ENCODE measurements at regions of chr7 and their contacts with region 1.

Region 1: DNA sequence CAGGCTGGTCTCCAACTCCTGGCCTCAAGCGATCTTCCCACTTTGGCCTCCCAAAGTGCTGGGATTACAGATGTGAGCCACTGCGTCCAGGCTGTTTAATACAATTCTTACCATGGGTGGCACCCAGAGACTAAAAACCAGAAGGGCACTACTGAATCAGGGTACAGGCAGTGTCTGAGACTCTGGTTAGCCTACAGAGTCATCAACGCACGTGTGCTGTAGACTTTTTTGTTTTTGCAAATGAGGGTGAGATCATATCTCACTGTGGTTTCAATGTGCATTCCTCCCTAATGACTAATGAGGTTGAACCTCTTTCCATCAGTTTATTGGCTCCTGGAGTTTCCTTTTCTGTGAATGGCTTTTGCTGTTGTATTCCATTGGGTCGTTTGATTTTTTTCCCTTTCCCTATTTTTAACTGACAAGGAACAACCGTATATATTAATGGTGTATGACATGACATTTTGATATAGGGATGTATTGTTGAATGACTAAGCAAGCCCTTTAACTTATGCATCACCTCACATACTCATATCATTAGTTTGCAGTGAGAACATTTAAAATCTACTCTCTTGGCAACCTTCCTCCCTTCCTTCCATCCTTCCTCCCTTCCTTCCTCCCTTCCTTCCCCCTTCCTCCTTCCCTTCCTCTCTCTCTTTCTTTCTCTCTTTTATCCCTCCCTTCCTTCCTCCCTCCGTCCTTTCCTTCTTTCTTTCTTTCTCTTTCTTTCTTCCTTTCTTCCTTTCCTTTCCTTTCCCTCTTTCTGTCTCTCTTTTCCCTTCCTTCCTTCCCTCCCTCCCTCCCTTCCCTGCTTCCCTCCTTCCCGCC is 9.3 kb upstream of the METTL27 start:
- DNase-seq: peak; percentile 100
- H3K4me3 ChIP-seq: no peak overlapping the region
- H3K27ac ChIP-seq: peak overlapping the region; percentile 98
- H3K4me1 ChIP-seq: peaks cover 43% of the 10 kb centered on the region
- H3K27me3 ChIP-seq: no peaks in the 10 kb centered on the region
- CTCF ChIP-seq: no peak

Region 2: DNA sequence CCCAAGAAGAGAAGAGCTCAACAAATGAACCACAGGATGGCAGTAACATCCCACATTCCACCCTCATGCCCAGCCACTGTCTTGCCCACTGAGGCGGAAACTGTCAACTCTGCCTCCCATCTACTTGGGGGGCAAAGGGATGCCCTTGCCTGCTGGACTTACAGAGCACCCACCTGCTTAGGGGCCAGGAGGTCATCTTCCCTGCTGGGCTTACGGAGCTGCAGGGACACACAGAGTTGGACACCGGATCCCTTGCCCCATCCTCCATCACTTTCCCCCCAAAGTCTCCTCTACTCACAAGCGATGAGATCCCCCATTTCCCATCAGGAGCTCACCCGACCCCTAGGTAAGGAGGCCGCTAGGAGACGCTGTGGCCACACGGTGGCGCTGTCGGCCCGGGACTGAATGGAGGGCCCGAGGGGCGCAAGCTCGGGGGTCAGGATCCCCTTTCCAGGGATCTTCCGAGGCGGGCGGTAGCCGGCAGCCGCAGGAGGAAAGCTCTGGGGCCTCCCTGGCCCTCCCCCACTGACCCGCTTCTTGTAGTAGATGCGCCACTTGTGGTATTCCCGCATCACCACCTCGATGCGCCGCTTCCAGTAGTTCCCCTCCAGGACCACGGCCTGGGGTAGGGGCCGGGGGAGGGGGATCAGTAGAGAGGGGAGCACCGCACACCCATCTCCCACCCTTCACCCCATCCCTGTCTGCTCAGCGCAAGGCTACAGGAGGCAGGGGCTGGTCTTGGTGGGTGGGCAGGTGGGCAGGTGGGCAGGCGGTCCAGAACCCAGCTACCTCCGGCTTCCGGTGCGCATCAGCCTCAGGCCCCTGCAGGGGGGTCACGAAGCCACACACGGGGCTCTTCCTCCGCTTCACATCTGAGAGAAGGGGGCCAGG is 244.6 kb before region 1 on chr7:
- CTCF ChIA-PET with region 1: no interaction called
- dilution Hi-C with region 1: no loop called
- in situ Hi-C with region 1: no loop called
- intact Hi-C with region 1: loop called (anchors 2 kb)
- DNase-seq: no peak
- H3K4me3 ChIP-seq: no peak overlapping the region
- H3K27ac ChIP-seq: no peak overlapping the region
- H3K4me1 ChIP-seq: peaks cover 9% of the 10 kb centered on the region
- H3K27me3 ChIP-seq: no peaks in the 10 kb centered on the region
- CTCF ChIP-seq: peak; percentile 85 to 98

Region 3: DNA sequence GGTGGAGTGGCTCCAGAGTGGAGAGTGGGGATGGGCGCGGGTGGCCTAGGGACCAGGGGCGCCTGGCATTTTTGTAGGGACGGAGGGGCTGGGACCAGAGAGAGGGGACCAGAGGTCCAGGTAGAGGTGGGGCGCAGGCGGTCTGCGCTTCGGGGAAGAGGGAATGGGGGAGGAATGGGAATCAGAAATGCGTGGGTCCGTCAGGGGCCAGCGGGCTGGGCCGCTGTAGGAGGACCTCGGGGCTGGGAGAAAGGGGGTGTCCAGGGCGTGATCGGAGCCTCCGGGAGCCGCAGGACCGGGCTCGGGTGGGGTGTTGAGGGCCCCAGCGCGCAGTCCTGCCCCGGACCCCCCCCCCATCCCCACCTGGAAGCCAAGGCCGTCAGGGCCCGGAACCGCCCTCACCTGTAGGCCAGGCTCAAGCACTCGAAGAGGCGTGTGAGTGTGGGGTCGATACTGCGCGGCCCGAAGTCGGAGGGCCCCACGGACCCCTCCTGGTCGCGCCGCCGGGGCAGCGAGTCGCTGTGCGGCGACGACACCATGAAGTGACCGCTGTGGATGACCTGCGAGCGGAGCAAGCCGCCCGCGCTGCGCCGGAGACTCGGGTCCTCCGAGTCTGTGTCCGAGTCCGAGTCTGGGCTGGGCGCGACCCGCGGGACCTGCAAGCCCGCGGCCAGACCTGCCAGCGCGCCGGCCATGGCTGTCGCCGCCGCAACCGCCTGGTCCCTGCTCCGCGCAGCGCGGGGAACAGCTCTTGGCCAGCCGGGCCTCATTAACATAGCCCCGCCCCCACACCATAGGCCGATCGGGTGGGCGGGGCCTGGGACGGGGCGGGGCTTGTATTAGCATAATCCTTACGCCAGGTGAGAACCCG is 227.6 kb before region 1 on chr7 and contains the start of gene MLXIPL:
- CTCF ChIA-PET with region 1: no interaction called
- dilution Hi-C with region 1: no loop called
- in situ Hi-C with region 1: loop called in 1 of 2 experiments (anchors 10 kb)
- intact Hi-C with region 1: no loop called
- DNase-seq: peak; percentile 62
- H3K4me3 ChIP-seq: peak within 1 kb of the TSS; percentile 39 to 47 (median 46)
- H3K27ac ChIP-seq: no peak within 1 kb of the TSS
- H3K4me1 ChIP-seq: peaks cover 14% of the 10 kb centered on the region
- H3K27me3 ChIP-seq: peaks cover 14% of the 10 kb centered on the region
- CTCF ChIP-seq: no peak
- total RNA-seq, gene MLXIPL: 1.5 TPM in 1 of 2 donors, not detected in the other

Region 4: GRCh38 chr7:73792594-73793292 is 58.9 kb before region 1 on chr7:
- CTCF ChIA-PET with region 1: no interaction called
- dilution Hi-C with region 1: no loop called
- in situ Hi-C with region 1: no loop called
- intact Hi-C with region 1: no loop called
- DNase-seq: peak; percentile 20
- H3K4me3 ChIP-seq: no peak overlapping the region
- H3K27ac ChIP-seq: no peak overlapping the region
- H3K4me1 ChIP-seq: peaks cover 4% of the 10 kb centered on the region
- H3K27me3 ChIP-seq: no peaks in the 10 kb centered on the region
- CTCF ChIP-seq: no peak

Region 5: DNA sequence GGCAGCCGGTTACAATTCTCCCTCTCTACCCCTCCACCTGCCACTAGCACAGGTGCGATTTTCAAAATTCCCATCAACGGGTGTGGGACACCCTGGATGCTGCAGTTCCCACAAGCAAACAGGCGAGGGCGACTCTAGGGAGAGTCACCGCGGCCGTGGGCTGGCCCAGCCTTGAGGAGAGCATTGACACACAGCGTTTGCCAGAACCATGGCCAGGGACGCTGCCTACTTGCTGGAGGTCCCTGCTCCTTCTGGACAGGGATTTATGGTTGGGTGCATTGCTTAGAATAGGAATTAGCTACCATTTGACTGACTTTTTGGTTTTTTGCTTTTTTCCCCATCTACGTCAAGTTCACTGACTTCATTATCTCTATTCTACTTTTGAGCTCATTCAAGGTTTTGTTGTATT is 39.9 kb before region 1 on chr7:
- CTCF ChIA-PET with region 1: no interaction called
- dilution Hi-C with region 1: no loop called
- in situ Hi-C with region 1: loop called (anchors 5 to 10 kb)
- intact Hi-C with region 1: loop called (anchors 1 kb)
- DNase-seq: peak; percentile 68
- H3K4me3 ChIP-seq: no peak overlapping the region
- H3K27ac ChIP-seq: no peak overlapping the region
- H3K4me1 ChIP-seq: peaks cover 2% of the 10 kb centered on the region
- H3K27me3 ChIP-seq: no peaks in the 10 kb centered on the region
- CTCF ChIP-seq: peak; percentile 87 to 93

Region 6: DNA sequence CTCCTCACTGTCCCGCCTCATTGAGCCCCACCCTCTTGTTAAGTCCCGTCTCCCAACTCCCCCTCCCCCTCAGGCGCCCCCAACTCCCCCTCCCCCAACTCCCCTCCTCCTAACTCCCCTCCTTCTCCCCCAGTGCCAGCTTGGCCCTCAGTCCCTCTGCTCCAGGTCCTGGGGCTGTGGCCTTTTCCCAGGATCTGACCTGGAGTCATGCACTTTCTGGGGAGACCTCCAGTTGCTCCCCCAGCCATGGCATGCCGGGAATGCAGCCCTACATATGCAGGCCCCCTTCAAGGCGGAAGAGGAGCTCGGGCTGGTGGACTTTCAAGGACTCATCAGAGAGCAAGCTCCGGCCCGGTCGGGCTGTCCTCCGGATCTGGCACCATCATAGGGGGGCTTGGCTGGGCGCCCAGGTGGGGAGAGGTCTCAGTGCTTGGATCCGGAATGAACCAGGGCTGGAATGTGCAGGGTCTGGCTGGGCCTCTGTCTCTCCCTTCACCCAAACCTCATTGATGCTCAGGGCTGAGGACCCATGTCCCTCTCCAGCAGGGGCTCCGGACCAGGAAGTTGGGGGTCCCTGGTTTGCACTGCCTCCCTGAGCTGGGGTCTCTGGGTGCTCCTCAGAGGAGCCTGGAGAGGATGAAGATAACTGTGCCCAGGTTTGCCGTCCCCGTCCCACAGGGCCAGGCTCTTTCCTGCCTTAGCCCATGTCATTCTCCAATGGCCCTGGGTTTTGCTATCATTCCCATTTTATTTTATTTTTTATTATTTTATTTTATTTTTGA is 50.4 kb after region 1 on chr7:
- CTCF ChIA-PET with region 1: interaction called, 14 read pairs
- dilution Hi-C with region 1: no loop called
- in situ Hi-C with region 1: no loop called
- intact Hi-C with region 1: no loop called
- DNase-seq: no peak
- H3K4me3 ChIP-seq: no peak overlapping the region
- H3K27ac ChIP-seq: no peak overlapping the region
- H3K4me1 ChIP-seq: no peaks in the 10 kb centered on the region
- H3K27me3 ChIP-seq: peaks cover 2% of the 10 kb centered on the region
- CTCF ChIP-seq: no peak